ENCODE measurements at regions of chr3 and their contacts with region 1.

Region 1: DNA sequence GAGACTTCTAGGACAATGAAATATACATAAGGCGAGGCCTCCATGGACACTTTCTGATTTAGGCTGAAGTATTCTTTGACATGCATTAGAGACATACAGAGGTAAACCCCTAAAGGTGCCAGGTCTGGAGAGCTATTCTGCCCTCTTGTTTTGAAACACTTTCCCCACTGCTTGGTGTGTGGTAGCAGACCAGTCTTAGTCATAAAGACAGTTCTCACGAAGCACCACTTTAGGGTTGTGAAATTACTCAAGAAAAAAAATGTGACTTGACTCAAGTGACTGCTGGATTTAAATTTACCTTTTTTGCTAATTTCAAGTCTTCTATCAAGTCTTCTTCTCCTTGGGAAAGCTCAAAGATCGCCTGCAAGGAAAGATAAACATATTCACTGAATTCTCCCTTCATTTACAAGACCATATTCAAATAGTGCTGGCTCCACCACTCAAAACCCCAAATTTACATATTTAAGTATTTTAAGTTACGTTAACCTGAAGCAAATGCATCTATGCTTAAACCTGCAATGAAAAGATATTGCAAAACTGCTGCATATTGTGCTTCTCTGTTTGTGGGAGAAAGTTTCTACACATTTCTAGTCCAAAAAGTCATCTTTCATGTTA is 48.4 kb downstream of the ARHGEF3 start:
- DNase-seq: peak; percentile 73
- H3K4me3 Mint-ChIP-seq: peak overlapping the region; percentile 18
- H3K27ac Mint-ChIP-seq: peak overlapping the region; percentile 23
- H3K4me1 Mint-ChIP-seq: peaks cover 57% of the 10 kb centered on the region
- H3K27me3 Mint-ChIP-seq: no peaks in the 10 kb centered on the region

Region 2: GRCh38 chr3:56711344-56711743 is 42.0 kb before region 1 on chr3:
- CTCF ChIA-PET with region 1: interaction called, 3 read pairs
- POLR2A ChIA-PET with region 1: no interaction called
- intact Hi-C with region 1: loop called (anchors 5 kb)
- DNase-seq: no peak
- H3K4me3 Mint-ChIP-seq: no peak overlapping the region
- H3K27ac Mint-ChIP-seq: no peak overlapping the region
- H3K4me1 Mint-ChIP-seq: peaks cover 3% of the 10 kb centered on the region
- H3K27me3 Mint-ChIP-seq: no peaks in the 10 kb centered on the region

Region 3: GRCh38 chr3:56725175-56725574 is 28.1 kb before region 1 on chr3:
- CTCF ChIA-PET with region 1: interaction called, 3 read pairs
- POLR2A ChIA-PET with region 1: interaction called, 3 read pairs
- intact Hi-C with region 1: loop called (anchors 1 kb)
- DNase-seq: peak; percentile 86
- H3K4me3 Mint-ChIP-seq: peak overlapping the region; percentile 52
- H3K27ac Mint-ChIP-seq: peak overlapping the region; percentile 83
- H3K4me1 Mint-ChIP-seq: peaks cover 32% of the 10 kb centered on the region
- H3K27me3 Mint-ChIP-seq: no peaks in the 10 kb centered on the region